Dorsolateral prefrontal cortex (tissue), 120 donors: ENCODE measurements at regions of chr10 and their contacts with region 1.

Region 1: GRCh38 chr10:86899670-86900276 is 57.6 kb downstream of the MMRN2 start:
- DNase-seq: peak in 8 of 10 donors; percentile 36 to 83 (median 62)
- H3K4me3 ChIP-seq: peak overlapping the region in 13 of 59 donors; percentile 2 to 24 (median 12)
- H3K27ac ChIP-seq: peak overlapping the region in 32 of 59 donors; percentile 0 to 69 (median 45)
- H3K27me3 ChIP-seq: no peaks in the 10 kb centered on the region
- CTCF ChIP-seq: peak; percentile 73 to 92 (median 85)

Region 2: DNA sequence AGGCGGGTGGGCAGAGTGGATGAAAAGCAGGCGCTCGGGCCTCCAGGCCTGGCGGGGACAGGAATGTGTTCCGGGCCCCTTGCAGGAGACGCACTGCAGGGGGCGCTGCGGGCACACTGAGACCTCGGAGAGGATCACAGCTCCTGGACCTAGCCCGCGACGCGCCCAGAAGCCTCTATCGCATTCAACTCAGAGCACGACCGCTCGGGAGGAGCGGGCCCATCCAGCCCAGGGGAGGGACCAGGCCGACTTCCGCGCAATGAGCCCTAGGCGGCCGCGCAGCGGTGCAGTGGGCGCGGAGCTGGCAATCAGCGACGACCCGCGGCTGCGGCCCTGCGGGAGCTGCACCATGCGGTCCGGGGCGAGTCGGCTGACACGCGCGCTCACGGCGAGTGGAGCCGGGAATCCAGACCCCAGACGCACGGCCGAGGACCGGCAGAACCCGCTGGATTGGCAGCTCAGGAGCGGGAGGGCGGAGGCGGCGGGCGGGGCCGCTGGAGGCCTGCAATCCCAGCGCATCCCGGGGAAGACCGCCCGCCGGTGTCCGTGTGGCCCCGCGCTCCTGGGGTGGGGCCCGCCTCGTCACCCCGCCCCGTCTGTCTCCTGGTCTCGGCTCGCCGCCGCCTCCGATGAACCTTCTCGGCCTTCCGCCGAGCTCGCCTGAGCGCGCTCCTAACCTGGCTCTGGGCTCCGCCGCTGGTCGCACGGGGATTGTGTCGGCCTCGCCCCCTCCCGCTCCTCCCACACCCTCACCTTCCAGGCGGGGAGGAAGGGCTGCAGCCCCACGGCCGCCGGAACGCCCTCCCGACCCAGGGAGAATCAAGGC is 499.7 kb before region 1 on chr10:
- intact Hi-C with region 1: loop called in 1 of 2 experiments (anchors 5 kb)
- DNase-seq: peak; percentile 83 to 96 (median 95)
- H3K4me3 ChIP-seq: peak overlapping the region; percentile 56 to 94 (median 76)
- H3K27ac ChIP-seq: peak overlapping the region; percentile 35 to 98 (median 89)
- H3K27me3 ChIP-seq: no peaks in the 10 kb centered on the region
- CTCF ChIP-seq: peak; percentile 84 to 100 (median 96)

Region 3: GRCh38 chr10:86648706-86649427 is 250.9 kb before region 1 on chr10:
- intact Hi-C with region 1: loop called in 1 of 2 experiments (anchors 5 kb)
- DNase-seq: peak in 4 of 10 donors; percentile 21 to 38 (median 30)
- H3K4me3 ChIP-seq: no peak overlapping the region
- H3K27ac ChIP-seq: no peak overlapping the region
- H3K27me3 ChIP-seq: peaks cover 0 to 3% (median 0%) of the 10 kb centered on the region in 45 donors
- CTCF ChIP-seq: no peak

Region 4: GRCh38 chr10:86688398-86688921 is 211.3 kb before region 1 on chr10:
- intact Hi-C with region 1: loop called (anchors 5 kb)
- DNase-seq: peak in 5 of 10 donors; percentile 48 to 70 (median 56)
- H3K4me3 ChIP-seq: no peak overlapping the region
- H3K27ac ChIP-seq: peak overlapping the region in 14 of 59 donors; percentile 7 to 58 (median 28)
- H3K27me3 ChIP-seq: no peaks in the 10 kb centered on the region
- CTCF ChIP-seq: peak; percentile 48 to 91 (median 82)

Region 5: DNA sequence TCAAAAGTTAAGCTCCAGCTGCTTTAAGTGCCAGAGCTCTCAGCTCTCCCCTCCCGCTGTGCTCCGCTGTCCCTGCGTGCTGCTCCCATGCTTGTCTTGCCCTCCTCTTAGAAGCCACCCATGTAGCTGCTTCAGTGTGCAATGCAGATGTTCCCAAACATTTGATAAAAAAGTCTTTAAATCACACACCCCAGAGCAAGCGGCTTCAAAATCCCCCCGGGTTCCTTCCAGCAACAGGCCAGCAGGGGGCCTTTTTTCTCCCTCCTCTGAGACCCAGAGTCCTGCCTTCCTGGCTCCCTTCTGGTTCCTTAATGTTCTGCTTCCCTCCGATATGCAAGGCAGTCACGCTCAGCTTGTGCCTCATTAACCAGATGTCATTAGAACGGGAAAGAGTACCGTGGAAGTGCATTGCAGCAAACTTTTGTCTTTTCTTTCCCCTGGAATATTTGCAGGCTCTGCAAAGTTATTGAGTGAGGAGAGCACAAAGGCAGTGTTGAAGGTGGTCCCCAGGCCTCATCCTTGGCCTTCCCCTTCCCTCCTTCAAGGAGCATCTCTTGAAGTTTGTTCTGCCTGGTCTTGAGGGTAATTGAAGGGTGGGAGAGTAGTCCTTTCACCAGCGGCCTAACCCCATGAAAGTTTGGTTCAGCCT is 205.9 kb before region 1 on chr10:
- intact Hi-C with region 1: loop called (anchors 5 kb)
- DNase-seq: peak in 1 of 10 donors; percentile 47
- H3K4me3 ChIP-seq: no peak overlapping the region
- H3K27ac ChIP-seq: peak overlapping the region in 20 of 59 donors; percentile 5 to 68 (median 29)
- H3K27me3 ChIP-seq: no peaks in the 10 kb centered on the region
- CTCF ChIP-seq: peak in 55 of 56 donors; percentile 22 to 68 (median 54)

Region 6: GRCh38 chr10:86710987-86711512 is 188.7 kb before region 1 on chr10:
- intact Hi-C with region 1: loop called (anchors 1 to 2 kb)
- DNase-seq: peak; percentile 58 to 91 (median 80)
- H3K4me3 ChIP-seq: peak overlapping the region; percentile 45 to 82 (median 72)
- H3K27ac ChIP-seq: peak overlapping the region; percentile 66 to 99 (median 94)
- H3K27me3 ChIP-seq: no peaks in the 10 kb centered on the region
- CTCF ChIP-seq: peak; percentile 48 to 93 (median 84)

Region 7: GRCh38 chr10:86755740-86756510 is 143.8 kb before region 1 on chr10:
- intact Hi-C with region 1: loop called (anchors 5 kb)
- DNase-seq: peak; percentile 66 to 94 (median 84)
- H3K4me3 ChIP-seq: peak overlapping the region; percentile 54 to 96 (median 89)
- H3K27ac ChIP-seq: peak overlapping the region in 58 of 59 donors; percentile 40 to 97 (median 92)
- H3K27me3 ChIP-seq: no peaks in the 10 kb centered on the region
- CTCF ChIP-seq: peak in 16 of 56 donors; percentile 4 to 29 (median 18)